HEK293 (cell line): ENCODE measurements at regions of chr2 and their contacts with region 1.

Region 1: GRCh38 chr2:11375025-11375688 is 30.7 kb upstream of the ROCK2 start:
- H3K4me3 ChIP-seq: no peak overlapping the region
- H3K27ac ChIP-seq: peak overlapping the region; percentile 75
- H3K4me1 ChIP-seq: peaks cover 9% of the 10 kb centered on the region
- CTCF ChIP-seq: no peak

Region 2: DNA sequence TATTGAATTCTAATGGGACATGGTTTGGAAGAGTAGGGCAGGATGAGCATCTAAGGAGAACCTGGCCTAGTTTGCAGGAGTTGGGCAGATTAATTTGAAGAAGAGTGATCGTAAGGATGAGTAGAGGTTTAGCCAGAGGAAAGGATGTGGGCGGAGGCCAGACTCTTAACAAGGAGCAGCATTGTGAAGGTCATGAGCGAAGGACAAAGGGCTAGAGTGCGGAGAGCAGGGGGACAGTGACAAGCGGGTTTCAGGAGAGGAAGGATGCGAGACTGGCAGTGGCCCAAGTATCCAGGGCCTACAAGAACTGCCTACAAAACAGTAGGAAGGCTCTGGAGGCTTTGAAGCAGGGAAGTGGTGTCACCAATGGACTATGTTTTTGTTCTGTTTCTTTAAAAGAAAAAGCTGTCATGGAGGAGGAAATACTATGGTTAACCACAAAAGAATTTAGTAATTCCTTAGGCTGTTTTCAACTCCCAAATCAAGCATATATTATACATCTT is 199.8 kb before region 1 on chr2:
- CTCF ChIA-PET with region 1: no interaction called
- POLR2A ChIA-PET with region 1: no interaction called
- H3K4me3 ChIP-seq: no peak overlapping the region
- H3K27ac ChIP-seq: no peak overlapping the region
- H3K4me1 ChIP-seq: no peaks in the 10 kb centered on the region
- CTCF ChIP-seq: no peak

Region 3: DNA sequence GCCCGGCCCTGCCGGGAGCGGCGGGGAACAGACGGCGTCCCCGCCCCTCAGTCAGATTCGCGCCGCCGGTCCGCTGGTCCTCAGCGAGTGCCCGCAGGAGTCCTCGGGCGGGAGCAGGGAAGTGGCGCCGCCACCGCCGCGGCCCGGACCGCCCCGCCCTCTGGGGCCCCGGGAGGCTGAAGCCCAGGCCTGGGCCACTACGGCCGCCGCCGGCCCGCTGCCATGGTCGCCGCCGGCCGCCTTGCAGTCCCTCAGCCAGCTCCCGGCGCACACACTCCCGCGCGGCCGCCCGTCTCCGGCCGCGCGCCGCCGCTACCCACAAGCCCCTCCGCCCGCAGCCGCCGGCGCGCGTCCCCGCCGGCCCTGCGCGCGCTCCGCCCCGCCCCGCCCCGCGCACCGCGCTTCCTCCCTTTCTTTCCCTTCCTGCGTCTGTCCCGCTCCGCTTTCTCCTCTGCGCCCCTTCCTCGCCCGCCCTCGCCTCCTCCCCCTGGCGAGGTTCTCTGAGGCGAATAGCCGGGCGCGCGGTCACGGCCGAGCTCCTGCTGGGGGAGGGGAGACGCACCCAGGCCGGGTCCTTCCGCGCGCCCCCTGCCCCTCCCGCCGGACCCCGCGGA is 30.7 kb before region 1 on chr2 and contains the start of gene ROCK2:
- CTCF ChIA-PET with region 1: interaction called, 3 read pairs
- POLR2A ChIA-PET with region 1: interaction called, 24 read pairs
- H3K4me3 ChIP-seq: peak within 1 kb of the TSS; percentile 64
- H3K27ac ChIP-seq: peak within 1 kb of the TSS; percentile 92
- H3K4me1 ChIP-seq: peaks cover 21% of the 10 kb centered on the region
- CTCF ChIP-seq: no peak

Region 4: GRCh38 chr2:11389551-11390528 is 14.7 kb after region 1 on chr2:
- CTCF ChIA-PET with region 1: interaction called, 13 read pairs
- POLR2A ChIA-PET with region 1: interaction called, 10 read pairs
- H3K4me3 ChIP-seq: no peak overlapping the region
- H3K27ac ChIP-seq: no peak overlapping the region
- H3K4me1 ChIP-seq: peaks cover 6% of the 10 kb centered on the region; the same call in 1 of the 2 replicates
- CTCF ChIP-seq: no peak

Region 5: GRCh38 chr2:11411768-11412448 is 36.8 kb after region 1 on chr2:
- CTCF ChIA-PET with region 1: interaction called, 10 read pairs
- POLR2A ChIA-PET with region 1: no interaction called
- H3K4me3 ChIP-seq: no peak overlapping the region
- H3K27ac ChIP-seq: no peak overlapping the region
- H3K4me1 ChIP-seq: no peaks in the 10 kb centered on the region
- CTCF ChIP-seq: peak; percentile 31; the same call in 1 of the 2 replicates